ENCODE measurements at regions of chr2 and their contacts with region 1.

Region 1: DNA sequence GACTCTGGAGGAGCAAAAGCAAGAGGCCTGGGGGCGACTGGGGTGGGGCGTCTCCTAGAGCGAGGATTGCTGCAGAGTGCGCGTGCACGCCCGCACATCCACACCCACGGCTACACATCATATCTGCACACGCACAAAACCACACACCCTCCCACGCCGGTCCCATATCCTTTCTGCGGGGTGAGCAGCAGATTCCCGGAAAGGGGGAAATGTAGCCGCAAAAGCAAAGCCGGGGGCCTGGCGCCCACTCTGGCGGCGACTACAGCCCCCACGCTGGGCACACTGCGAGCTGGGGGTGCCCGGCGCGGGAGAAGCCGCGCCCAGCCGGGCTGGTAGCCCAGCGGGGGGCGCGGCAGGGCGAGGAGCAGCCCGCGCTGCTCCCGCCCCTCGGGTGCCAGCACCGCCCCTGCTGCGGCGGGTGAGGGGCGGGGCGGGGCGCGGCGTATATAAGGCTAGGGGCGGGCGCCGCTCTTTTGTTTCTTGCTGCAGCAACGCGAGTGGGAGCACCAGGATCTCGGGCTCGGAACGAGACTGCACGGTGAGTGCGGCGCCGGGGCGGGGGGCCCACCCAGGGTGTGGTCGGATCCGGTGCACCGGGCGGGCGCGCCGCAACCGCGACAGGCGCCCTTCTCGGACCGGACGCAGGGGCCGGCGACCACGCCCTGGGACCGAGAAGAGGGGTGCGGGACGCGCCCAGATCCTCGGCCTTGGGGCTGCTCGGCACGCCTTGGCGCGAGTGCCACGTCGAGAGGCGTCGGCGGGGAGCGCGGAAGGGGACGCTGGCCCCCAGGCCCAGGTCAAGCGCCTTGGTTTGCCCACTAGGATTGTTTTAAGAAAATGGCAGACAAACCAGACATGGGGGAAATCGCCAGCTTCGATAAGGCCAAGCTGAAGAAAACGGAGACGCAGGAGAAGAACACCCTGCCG is at the start of gene TMSB10:
- DNase-seq: peak; percentile 94
- ATAC-seq: peak; percentile 84
- H3K4me3 ChIP-seq: peak within 1 kb of the TSS; percentile 67 to 98 (median 93)
- H3K4me3 Mint-ChIP-seq: peak within 1 kb of the TSS; percentile 87
- H3K27ac ChIP-seq: peak within 1 kb of the TSS; percentile 77 to 83
- H3K27ac Mint-ChIP-seq: peak within 1 kb of the TSS; percentile 94
- H3K4me1 ChIP-seq: peaks cover 41 to 46% of the 10 kb centered on the region in 2 donors
- H3K4me1 Mint-ChIP-seq: peaks cover 60% of the 10 kb centered on the region
- H3K27me3 ChIP-seq: no peaks in the 10 kb centered on the region
- H3K27me3 Mint-ChIP-seq: no peaks in the 10 kb centered on the region
- CTCF ChIP-seq: peak; percentile 6
- total RNA-seq, gene TMSB10: 868 and 885 TPM in 2 replicates

Region 2: DNA sequence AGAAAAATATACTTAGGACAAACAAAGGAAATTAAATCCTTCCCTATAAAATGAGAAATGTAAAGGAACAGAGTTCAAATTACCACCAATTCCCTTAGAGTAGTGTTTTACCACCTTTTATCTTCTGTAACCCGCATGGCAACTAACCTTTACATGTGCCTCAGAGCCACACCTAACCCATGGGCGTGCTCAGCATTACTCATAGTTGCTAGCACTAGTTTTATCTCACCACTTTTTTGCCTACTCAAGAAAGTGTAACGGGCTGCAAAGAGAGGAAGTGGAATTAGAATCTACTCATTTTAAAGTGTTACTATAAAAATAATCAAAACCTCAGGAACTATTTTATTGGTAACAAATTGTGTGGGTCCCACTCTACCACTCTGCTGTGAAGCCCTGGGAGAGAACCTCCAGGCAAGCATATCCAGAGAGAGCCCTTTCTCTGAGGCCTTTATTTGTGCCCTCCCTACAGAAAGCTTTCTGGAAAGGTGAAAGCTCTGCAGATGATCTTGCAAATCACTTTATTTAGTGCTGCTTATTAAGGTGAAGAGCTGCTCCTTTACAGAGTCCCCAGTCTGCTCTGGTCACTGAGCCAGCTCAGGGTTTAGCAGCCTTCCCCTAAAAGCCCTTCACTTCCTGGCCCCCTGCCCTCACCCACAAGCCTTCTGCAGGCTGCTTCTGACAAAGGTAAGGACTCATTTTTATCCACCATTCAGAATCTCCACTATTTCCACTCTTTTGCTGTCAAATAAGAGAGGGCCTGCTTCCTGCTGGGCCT is 123.3 kb before region 1 on chr2:
- CTCF ChIA-PET with region 1: no interaction called
- POLR2A ChIA-PET with region 1: no interaction called
- intact Hi-C with region 1: loop called (anchors 1 kb)
- DNase-seq: peak; percentile 52
- ATAC-seq: peak; percentile 94
- H3K4me3 ChIP-seq: no peak overlapping the region
- H3K4me3 Mint-ChIP-seq: no peak overlapping the region
- H3K27ac ChIP-seq: peak overlapping the region; percentile 33 to 34
- H3K27ac Mint-ChIP-seq: peak overlapping the region; percentile 62
- H3K4me1 ChIP-seq: peaks cover 29 to 30% of the 10 kb centered on the region in 2 donors
- H3K4me1 Mint-ChIP-seq: peaks cover 34% of the 10 kb centered on the region
- H3K27me3 ChIP-seq: no peaks in the 10 kb centered on the region
- H3K27me3 Mint-ChIP-seq: no peaks in the 10 kb centered on the region
- CTCF ChIP-seq: no peak

Region 3: DNA sequence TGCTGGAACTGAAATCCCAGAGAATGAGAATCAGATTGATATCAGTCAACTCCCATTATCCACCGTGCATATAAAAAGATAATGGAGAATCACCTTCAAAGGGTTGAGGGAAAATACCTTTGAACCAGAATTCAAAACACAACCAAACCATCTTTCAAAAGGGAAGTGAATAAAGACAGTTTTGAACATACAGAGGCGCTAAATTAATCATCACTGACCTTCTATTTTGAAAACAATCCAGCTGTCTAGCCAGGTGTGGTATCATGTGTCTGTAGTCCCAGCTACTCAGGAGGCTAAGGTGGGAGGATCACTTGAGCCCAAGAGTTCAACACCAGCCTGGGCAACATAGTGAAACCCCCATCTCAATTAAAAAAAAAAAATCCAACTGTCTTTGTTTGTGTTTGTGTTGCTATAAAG is 88.2 kb before region 1 on chr2:
- CTCF ChIA-PET with region 1: no interaction called
- POLR2A ChIA-PET with region 1: no interaction called
- intact Hi-C with region 1: no loop called
- DNase-seq: peak; percentile 35
- ATAC-seq: peak; percentile 64
- H3K4me3 ChIP-seq: no peak overlapping the region
- H3K4me3 Mint-ChIP-seq: peak overlapping the region; percentile 2
- H3K27ac ChIP-seq: no peak overlapping the region
- H3K27ac Mint-ChIP-seq: peak overlapping the region; percentile 2
- H3K4me1 ChIP-seq: peaks cover 12 to 18% of the 10 kb centered on the region in 2 donors
- H3K4me1 Mint-ChIP-seq: peaks cover 21% of the 10 kb centered on the region
- H3K27me3 ChIP-seq: no peaks in the 10 kb centered on the region
- H3K27me3 Mint-ChIP-seq: no peaks in the 10 kb centered on the region
- CTCF ChIP-seq: no peak

Region 4: GRCh38 chr2:84888401-84889276 is 16.8 kb before region 1 on chr2:
- CTCF ChIA-PET with region 1: interaction called, 70 read pairs
- POLR2A ChIA-PET with region 1: interaction called, 40 read pairs
- intact Hi-C with region 1: no loop called
- DNase-seq: peak; percentile 81
- ATAC-seq: peak; percentile 100
- H3K4me3 ChIP-seq: peak overlapping the region in 4 of 5 experiments; percentile 21 to 46 (median 24)
- H3K4me3 Mint-ChIP-seq: peak overlapping the region; percentile 77
- H3K27ac ChIP-seq: peak overlapping the region; percentile 89 to 93
- H3K27ac Mint-ChIP-seq: peak overlapping the region; percentile 98
- H3K4me1 ChIP-seq: peaks cover 19 to 20% of the 10 kb centered on the region in 2 donors
- H3K4me1 Mint-ChIP-seq: peaks cover 16% of the 10 kb centered on the region
- H3K27me3 ChIP-seq: no peaks in the 10 kb centered on the region
- H3K27me3 Mint-ChIP-seq: no peaks in the 10 kb centered on the region
- CTCF ChIP-seq: no peak

Region 5: DNA sequence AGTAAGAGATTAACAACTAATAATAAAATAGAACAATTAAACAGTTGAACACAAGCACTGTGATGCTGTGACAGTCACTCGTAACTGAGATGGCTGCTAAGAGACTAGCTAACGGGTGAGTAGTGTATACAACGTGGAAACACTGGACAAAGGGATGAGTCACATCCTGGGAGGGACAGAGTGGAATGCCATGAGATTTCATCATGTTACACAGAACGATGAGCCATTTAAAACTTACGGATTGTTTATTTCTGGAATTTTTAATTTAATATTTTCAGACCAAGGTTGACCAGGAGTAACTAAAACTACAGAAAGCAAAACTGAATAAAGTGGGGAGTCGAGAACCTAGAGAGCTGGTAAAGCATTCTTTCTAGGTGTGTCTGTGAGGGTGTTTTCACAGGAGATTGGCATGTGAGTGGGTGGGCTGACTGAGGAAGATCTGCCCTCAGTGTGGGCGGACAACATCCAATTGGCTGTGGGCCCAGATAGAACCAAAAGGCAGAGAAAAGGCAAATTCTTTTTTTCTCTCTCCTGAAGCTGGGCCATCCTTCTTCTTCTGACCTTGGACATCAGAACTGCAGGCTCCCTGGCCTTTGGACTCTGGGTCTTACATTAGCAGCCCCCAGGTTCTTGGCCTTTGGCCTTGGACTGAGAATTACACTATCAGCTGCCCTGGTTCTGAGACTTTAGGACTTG is 14.6 kb after region 1 on chr2:
- CTCF ChIA-PET with region 1: interaction called, 159 read pairs
- POLR2A ChIA-PET with region 1: interaction called, 129 read pairs
- intact Hi-C with region 1: loop called (anchors 1 kb)
- DNase-seq: peak; percentile 52
- ATAC-seq: peak; percentile 52
- H3K4me3 ChIP-seq: peak overlapping the region in 4 of 5 experiments; percentile 8 to 55 (median 24)
- H3K4me3 Mint-ChIP-seq: peak overlapping the region; percentile 64
- H3K27ac ChIP-seq: peak overlapping the region; percentile 89 to 90
- H3K27ac Mint-ChIP-seq: peak overlapping the region; percentile 84
- H3K4me1 ChIP-seq: peaks cover 51 to 60% of the 10 kb centered on the region in 2 donors
- H3K4me1 Mint-ChIP-seq: peaks cover 56% of the 10 kb centered on the region
- H3K27me3 ChIP-seq: no peaks in the 10 kb centered on the region
- H3K27me3 Mint-ChIP-seq: no peaks in the 10 kb centered on the region
- CTCF ChIP-seq: no peak

Region 6: DNA sequence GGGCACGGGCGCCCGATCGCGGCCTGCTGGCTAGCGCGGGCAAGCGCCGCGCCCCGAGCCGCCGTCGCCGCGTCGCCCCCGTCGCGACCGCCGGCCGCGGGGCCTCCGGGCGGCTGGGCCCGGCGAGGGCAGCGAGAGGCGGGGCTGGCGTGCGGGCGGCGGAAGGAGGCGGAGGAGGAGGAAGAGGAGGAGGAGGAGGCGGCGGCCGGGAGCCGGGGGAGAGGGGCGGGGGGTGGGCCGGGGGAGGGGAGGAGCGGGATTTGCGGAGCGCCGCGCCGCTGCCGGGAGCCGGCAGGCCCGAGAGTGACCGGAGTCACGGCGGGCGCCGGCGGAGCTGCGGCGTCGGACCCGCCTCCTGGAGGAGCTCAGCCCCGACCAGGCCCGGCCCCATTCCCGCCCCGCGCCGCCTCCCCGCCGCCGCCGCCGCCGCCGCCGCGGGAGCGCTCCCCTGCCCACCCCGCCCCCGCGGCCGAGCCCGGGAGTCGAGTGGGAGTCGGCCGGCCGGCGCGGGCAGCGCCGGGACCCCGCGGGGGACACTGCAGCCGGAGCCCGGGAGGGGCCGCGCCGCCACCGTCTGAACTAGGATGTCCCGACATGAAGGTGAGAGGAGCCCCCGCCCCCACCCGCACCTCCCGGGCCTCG is 65.5 kb after region 1 on chr2 and contains the start of gene KCMF1:
- CTCF ChIA-PET with region 1: interaction called, 3 read pairs
- POLR2A ChIA-PET with region 1: interaction called, 11 read pairs
- intact Hi-C with region 1: loop called (anchors 1 kb)
- DNase-seq: no peak
- ATAC-seq: peak; percentile 56
- H3K4me3 ChIP-seq: peak within 1 kb of the TSS; percentile 85 to 97 (median 92)
- H3K4me3 Mint-ChIP-seq: peak within 1 kb of the TSS; percentile 98
- H3K27ac ChIP-seq: peak within 1 kb of the TSS; percentile 74 to 96
- H3K27ac Mint-ChIP-seq: peak within 1 kb of the TSS; percentile 97
- H3K4me1 ChIP-seq: peaks cover 42 to 48% of the 10 kb centered on the region in 2 donors
- H3K4me1 Mint-ChIP-seq: peaks cover 56% of the 10 kb centered on the region
- H3K27me3 ChIP-seq: no peaks in the 10 kb centered on the region
- H3K27me3 Mint-ChIP-seq: no peaks in the 10 kb centered on the region
- CTCF ChIP-seq: no peak
- total RNA-seq, gene KCMF1: 73.1 and 81.5 TPM in 2 replicates

Region 7: GRCh38 chr2:85838181-85838580 is 932.7 kb after region 1 on chr2:
- CTCF ChIA-PET with region 1: no interaction called
- POLR2A ChIA-PET with region 1: no interaction called
- intact Hi-C with region 1: no loop called
- DNase-seq: no peak
- ATAC-seq: no peak
- H3K4me3 ChIP-seq: no peak overlapping the region
- H3K4me3 Mint-ChIP-seq: no peak overlapping the region
- H3K27ac ChIP-seq: peak overlapping the region in 1 of 2 donors; percentile 16
- H3K27ac Mint-ChIP-seq: peak overlapping the region; percentile 24
- H3K4me1 ChIP-seq: peaks cover 3 to 10% of the 10 kb centered on the region in 2 donors
- H3K4me1 Mint-ChIP-seq: peaks cover 28% of the 10 kb centered on the region
- H3K27me3 ChIP-seq: no peaks in the 10 kb centered on the region
- H3K27me3 Mint-ChIP-seq: no peaks in the 10 kb centered on the region
- CTCF ChIP-seq: no peak